ENCODE measurements at regions of chr6 and their contacts with region 1.

Region 1: GRCh38 chr6:39865011-39865888 is 69.0 kb downstream of the MOCS1 start:
- H3K4me3 ChIP-seq: no peak overlapping the region
- H3K27ac ChIP-seq: no peak overlapping the region
- H3K4me1 ChIP-seq: no peaks in the 10 kb centered on the region
- CTCF ChIP-seq: peak; percentile 48

Region 2: DNA sequence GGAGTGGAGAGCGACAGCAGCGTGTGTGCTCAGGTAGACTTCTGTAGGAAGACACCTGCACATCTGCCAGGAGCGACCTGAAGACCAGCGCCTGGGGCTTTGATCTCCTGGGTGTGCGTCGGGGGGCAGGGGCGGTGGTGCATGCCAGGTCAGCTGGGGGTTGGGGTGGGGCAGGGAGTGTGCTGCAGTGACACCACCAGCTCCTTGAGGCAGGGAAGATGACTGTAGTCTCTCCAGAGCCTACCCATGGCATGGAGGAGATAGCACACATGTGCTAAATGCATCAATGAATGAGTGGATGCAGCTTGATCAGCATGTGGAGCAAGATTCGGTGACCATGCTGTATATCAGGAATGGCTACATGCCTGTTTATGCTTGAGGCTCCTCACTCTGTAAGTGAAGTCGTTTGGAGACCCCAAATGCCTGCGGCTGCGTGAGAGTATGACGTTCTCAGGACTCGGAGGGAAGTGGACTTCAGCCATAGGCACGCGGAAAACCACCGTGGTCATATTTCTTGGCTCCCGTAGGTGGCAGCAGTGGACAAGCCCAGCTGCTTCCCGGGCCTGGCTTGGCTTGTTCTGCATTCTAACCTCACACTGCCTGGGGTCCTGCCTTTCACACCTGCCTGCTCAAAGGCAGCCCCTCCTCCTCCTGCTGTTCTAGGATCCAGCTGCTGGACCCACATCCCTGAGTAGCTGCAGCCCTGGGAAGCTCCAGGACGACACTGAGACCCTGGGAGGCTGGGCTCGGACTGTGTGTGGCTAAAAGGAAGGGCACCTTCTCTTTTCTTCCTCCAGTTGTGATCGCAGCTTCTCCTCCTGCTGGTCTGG is 503.4 kb before region 1 on chr6:
- CTCF ChIA-PET with region 1: interaction called, 18 read pairs
- POLR2A ChIA-PET with region 1: no interaction called
- H3K4me3 ChIP-seq: no peak overlapping the region
- H3K27ac ChIP-seq: no peak overlapping the region
- H3K4me1 ChIP-seq: no peaks in the 10 kb centered on the region
- CTCF ChIP-seq: peak; percentile 80

Region 3: DNA sequence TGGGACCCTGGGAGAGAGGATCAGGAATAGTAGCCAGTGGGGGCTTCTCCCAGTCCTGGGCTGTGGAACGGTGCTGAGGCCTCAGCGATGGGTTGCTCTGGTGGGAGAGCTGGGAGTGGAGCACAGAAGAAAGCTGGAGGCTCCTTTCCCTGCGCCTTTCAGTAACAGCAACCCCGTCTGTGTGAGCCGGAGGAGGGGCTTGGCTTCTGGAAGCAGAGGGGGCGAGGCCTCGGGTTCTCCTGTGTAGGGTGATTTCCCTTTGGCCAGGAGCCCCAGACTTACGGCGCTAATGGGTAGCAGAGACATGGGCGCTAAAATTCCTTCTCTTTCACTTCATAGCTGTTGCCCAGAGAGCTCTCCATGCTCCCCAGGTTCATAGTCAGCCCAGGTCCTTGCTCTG is 18.0 kb before region 1 on chr6:
- CTCF ChIA-PET with region 1: interaction called, 33 read pairs
- POLR2A ChIA-PET with region 1: no interaction called
- H3K4me3 ChIP-seq: no peak overlapping the region
- H3K27ac ChIP-seq: no peak overlapping the region
- H3K4me1 ChIP-seq: no peaks in the 10 kb centered on the region
- CTCF ChIP-seq: no peak

Region 4: GRCh38 chr6:39887381-39888070 is 22.3 kb after region 1 on chr6:
- CTCF ChIA-PET with region 1: interaction called, 58 read pairs
- POLR2A ChIA-PET with region 1: no interaction called
- H3K4me3 ChIP-seq: no peak overlapping the region
- H3K27ac ChIP-seq: no peak overlapping the region
- H3K4me1 ChIP-seq: no peaks in the 10 kb centered on the region
- CTCF ChIP-seq: no peak

Region 5: DNA sequence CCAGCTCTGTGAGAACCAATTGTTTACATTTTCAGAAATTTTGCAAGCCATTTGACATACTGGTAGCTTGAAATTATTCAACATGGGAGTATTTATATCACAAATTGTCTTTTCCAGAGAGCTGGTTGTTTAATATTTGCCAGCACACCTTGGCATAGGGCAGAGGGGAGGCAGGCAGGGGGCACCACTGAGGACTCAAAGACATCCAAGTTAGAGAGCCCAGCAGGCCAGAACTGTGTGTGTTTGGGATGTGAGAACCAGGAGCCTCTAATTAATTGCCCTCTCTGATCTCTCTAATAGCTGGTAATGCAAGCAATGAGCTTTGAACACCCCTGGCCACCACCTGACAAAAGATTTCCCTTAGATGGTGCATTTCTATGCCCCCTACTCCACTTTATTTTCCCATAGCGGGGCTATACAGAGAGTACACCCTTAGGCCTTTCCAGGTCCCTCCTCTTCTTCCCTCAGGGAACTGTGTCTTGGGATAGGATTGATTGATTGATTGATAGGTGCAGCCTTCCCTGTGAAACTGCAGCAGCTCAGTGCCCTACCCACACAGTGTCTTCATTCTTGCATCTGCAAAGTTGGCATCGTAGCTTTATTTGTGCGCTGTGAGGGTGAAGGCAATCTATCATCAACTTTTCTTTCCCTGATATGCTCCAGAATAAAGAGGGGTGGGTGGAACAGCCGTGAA is 39.8 kb after region 1 on chr6:
- CTCF ChIA-PET with region 1: interaction called, 10 read pairs
- POLR2A ChIA-PET with region 1: no interaction called
- H3K4me3 ChIP-seq: no peak overlapping the region
- H3K27ac ChIP-seq: no peak overlapping the region
- H3K4me1 ChIP-seq: no peaks in the 10 kb centered on the region
- CTCF ChIP-seq: no peak